ENCODE measurements at regions of chr20 and their contacts with region 1.

Region 1: GRCh38 chr20:44080646-44081267 is 106.2 kb downstream of the JPH2 start:
- DNase-seq: peak; percentile 89
- CTCF ChIP-seq: peak; percentile 96

Region 2: GRCh38 chr20:43430265-43431133 is 650.3 kb before region 1 on chr20:
- in situ Hi-C with region 1: no loop called
- DNase-seq: no peak
- CTCF ChIP-seq: no peak

Region 3: GRCh38 chr20:43456809-43457639 is 623.7 kb before region 1 on chr20:
- in situ Hi-C with region 1: loop called (anchors 10 kb)
- DNase-seq: peak; percentile 93
- CTCF ChIP-seq: no peak

Region 4: DNA sequence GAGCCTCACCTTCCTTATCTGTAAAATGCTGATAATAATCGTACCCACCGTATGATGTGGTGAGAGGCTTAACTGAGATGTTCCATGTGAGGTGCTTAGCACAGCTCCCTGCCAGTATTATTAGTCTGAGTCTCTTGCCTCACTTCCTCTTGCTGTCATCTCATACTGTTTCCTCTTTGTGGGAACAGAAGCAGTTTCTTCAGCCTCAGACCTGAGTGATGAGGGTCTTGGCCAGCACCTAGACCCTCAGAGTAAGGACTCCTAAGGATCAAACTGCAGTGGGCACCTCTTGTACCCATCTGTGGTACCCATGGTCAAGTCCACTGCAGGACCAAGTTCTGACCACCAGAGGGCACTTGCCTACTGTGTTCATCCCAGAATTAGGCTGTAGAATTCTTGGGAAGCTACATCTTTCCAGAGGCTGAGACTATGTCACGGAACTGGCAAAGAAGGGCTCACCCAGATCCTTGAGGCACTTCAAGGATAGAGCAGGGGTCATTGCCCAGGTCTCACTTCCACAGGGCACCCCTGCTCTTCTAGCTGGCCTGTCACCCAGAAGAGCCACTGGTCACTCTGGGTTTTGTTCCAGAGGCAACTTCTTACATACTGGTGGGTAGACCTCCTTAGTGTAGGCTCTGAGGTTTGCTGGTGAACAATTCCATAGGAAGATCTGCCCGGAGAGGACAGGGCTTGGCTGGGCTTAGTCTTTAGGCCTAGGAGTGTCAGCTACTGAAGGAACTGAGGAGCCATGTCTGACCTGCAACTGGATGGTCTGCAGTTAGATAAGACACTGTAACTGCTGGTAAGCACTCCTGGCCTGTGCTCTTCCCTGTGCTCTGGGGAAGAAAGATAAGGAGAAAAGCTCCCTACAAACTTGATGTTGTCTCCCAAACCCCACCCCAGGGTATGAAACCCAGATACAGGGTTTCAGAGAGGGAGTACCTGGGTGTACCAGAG is 542.6 kb before region 1 on chr20:
- in situ Hi-C with region 1: loop called (anchors 10 kb)
- DNase-seq: peak; percentile 61
- CTCF ChIP-seq: peak; percentile 76

Region 5: GRCh38 chr20:43749734-43750294 is 330.9 kb before region 1 on chr20:
- in situ Hi-C with region 1: loop called (anchors 10 kb)
- DNase-seq: peak; percentile 87
- CTCF ChIP-seq: peak; percentile 98

Region 6: DNA sequence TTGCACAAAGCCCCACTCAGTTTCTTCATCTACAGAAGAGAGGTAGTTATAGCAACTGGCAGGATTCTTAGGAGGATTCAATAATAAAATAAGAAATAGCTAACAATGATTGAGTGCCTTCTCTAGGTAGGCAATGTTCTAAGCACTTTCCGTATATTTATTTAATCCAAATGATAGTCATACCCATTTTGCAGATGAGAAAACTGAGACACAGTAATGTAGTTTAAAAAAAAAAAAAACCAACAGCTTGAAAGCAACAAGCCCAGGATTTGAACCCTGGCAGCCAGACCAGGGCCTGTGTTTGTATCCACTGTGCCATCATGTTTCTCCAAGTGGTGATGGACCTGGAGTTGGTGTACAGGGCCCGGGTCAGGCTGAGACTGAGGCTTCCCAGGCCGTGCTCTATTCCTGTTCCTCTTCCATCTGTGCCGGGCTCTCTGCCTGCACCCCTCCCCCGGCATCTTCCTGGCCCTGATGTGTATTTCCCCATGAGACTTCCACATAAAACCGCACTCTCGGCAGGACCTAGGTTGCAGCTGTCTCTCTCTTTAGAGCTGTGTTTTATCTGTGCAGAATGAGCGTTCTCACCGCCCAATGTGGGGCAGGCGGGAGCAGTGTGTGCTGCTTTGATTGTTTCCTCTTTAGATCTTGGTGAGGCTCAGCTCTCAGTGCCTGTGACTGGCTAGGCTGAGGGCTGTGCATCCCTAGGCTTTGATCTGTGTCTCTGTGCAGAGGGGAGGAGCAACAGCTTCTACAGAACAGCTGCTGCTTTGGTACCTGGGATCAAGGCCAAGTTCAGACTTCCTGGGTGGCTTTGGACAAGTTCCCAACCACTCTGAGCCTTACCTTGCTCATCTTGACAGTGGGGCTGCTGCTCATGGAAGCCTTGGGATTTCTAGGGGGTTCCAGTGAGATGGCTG is 116.6 kb before region 1 on chr20:
- in situ Hi-C with region 1: no loop called
- DNase-seq: no peak
- CTCF ChIP-seq: no peak

Measured in GM13976 (cell line).